ENCODE measurements at regions of chr19 and their contacts with region 1.

Region 1: DNA sequence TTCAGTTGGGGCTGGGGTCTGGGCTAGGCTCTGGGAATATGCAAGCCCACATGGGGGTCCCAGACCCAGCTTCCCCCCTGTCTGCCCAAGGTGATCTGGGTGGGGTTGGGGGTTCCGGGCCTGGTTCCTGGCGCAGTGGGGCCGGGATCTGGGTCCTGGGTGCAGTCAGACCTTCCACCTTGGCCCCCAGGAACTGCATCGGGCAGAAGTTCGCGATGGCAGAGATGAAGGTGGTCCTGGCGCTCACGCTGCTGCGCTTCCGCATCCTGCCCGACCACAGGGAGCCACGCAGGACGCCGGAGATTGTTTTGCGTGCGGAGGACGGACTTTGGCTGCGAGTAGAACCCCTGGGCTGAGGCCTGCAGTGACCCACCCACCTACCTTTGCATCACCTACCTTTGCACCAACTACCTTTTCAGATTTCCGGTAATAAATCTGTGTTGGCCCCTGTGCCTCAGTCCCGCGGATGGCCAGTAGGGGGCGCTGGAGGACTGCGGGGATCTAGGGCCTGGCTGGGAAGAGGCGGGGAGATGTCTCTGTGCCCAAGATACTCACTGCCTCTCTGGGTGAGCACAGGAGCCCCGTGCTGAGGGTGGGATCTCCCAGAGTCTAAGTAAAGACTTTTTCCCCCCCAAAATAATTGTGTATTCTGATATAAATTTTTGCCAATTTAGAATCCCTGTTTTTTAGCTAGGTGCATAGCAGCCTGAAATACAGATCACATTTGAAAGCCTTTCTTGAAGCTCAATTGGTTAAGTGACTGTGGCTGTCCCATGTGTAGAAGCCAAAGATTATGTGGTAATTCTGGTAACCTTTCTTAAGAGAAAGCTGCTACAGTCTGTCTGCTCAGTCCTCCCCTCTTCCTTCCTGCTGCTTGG is 11.5 kb upstream of the CYP4F3 start:
- DNase-seq: peak; percentile 83 to 94
- ATAC-seq: peak; percentile 88
- H3K4me3 ChIP-seq: no peak overlapping the region
- H3K27ac ChIP-seq: no peak overlapping the region
- H3K4me1 ChIP-seq: no peaks in the 10 kb centered on the region
- H3K27me3 ChIP-seq: no peaks in the 10 kb centered on the region

Region 2: DNA sequence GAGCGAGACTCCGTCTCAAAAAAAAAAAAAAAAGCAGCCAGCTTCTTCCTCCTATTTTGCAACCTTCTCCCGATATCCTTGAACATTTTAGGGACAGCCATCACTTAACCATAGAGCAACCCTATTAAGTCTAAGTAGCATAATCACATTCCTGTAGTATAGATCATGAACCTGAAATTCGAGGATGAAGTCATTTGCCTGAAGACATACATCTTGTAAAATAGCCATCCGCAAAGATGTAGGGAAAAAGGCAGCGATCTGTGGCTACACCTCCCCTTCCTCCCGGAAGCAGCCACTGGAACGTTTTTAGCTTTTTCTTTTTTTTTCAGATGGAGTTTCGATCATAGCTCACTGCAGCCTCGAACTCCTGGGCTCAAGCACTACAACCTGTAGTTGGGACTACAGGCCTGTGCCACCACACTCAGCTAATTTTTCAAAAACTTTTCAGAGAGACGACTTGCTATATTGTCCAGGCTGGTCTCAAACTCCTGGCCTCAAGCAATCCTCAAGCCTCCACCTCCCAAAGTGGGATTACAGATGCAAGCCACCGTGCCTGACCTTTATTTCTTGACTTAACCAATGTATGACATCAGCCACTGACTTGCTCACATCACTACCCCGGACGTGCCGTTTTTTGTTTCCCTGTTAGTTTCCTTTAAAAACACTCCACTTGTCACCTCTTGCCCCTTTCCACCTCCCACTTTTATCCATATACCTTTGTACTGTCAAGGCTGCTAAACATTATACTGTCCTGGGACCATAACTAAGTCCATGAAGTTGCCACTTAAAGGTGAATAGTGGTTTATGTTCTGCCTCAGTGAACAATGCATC is 395.0 kb before region 1 on chr19:
- intact Hi-C with region 1: no loop called
- DNase-seq: no peak
- ATAC-seq: no peak
- H3K4me3 ChIP-seq: no peak overlapping the region
- H3K27ac ChIP-seq: no peak overlapping the region
- H3K4me1 ChIP-seq: no peaks in the 10 kb centered on the region
- H3K27me3 ChIP-seq: no peaks in the 10 kb centered on the region

Region 3: DNA sequence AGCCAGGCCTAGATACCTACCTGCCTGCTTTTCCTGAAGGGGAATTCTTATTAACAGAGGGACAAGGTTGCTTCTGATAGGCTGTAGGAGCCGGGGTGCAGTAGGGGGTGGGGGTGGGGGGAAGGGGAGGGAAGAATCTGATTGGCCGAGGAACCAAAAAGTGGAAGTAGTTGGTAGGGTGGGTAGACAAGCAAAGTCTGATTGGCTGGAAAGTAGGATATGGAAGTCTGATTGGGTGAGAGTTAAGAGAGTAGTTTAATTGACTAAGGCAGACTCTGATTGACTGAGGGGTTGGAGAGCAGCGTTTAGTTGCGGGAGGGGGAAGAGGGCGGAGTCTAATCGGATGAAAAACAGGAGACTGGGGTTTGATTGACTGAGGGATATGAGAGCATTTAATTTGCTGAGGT is 130.3 kb before region 1 on chr19:
- intact Hi-C with region 1: no loop called
- DNase-seq: no peak
- ATAC-seq: no peak
- H3K4me3 ChIP-seq: no peak overlapping the region
- H3K27ac ChIP-seq: no peak overlapping the region
- H3K4me1 ChIP-seq: no peaks in the 10 kb centered on the region
- H3K27me3 ChIP-seq: no peaks in the 10 kb centered on the region

Region 4: GRCh38 chr19:15869109-15869555 is 239.9 kb after region 1 on chr19:
- intact Hi-C with region 1: loop called (anchors 10 kb)
- DNase-seq: no peak
- ATAC-seq: peak; percentile 59
- H3K4me3 ChIP-seq: no peak overlapping the region
- H3K27ac ChIP-seq: no peak overlapping the region
- H3K4me1 ChIP-seq: no peaks in the 10 kb centered on the region
- H3K27me3 ChIP-seq: no peaks in the 10 kb centered on the region

Region 5: DNA sequence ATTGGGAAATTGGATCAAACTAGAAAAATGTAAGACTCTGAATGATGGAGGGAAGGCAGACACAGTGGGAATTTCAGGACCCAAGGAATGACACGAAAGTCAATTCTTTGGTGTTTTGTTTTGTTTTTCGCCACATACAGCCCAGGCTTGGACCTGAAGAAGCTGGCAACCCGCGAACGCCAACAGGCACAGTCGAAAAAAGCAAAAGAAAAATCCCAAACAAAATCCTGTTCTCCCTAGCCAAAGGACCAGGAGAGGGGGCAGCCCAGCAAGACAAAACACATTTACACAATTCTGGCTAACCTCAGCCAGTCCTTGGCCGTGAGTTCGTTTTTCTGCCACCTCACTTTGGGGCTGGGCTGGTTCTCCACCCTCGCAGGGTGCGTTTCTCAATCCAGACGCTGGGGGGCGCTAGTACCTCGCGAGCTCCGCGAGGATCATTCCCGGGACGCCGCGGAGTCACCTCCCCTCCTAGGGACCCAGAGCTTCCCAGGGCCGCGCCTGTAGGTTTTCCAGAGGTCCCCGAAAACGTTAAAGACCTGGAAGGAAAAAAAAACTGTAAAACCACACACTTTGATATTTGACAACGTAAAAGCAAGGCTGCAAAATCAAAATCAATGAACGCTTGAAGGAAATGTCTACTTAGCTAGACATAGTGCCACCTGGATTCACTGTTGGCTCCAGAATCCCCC is 412.2 kb after region 1 on chr19:
- intact Hi-C with region 1: loop called in 1 of 2 experiments (anchors 5 kb)
- DNase-seq: peak; percentile 88 to 97
- ATAC-seq: peak; percentile 93
- H3K4me3 ChIP-seq: no peak overlapping the region
- H3K27ac ChIP-seq: peak overlapping the region in 1 of 2 donors; percentile 14
- H3K4me1 ChIP-seq: no peaks in the 10 kb centered on the region
- H3K27me3 ChIP-seq: no peaks in the 10 kb centered on the region

Measured in aorta (tissue), 5 donors.